ENCODE measurements at regions of chr3 and their contacts with region 1.

Region 1: GRCh38 chr3:52001443-52001974 is 5.8 kb upstream of the RPL29 start:
- DNase-seq: peak; percentile 77
- H3K4me3 ChIP-seq: no peak overlapping the region
- H3K27ac ChIP-seq: no peak overlapping the region
- H3K4me1 ChIP-seq: peaks cover 35% of the 10 kb centered on the region
- H3K27me3 ChIP-seq: no peaks in the 10 kb centered on the region
- CTCF ChIP-seq: peak; percentile 91

Region 2: DNA sequence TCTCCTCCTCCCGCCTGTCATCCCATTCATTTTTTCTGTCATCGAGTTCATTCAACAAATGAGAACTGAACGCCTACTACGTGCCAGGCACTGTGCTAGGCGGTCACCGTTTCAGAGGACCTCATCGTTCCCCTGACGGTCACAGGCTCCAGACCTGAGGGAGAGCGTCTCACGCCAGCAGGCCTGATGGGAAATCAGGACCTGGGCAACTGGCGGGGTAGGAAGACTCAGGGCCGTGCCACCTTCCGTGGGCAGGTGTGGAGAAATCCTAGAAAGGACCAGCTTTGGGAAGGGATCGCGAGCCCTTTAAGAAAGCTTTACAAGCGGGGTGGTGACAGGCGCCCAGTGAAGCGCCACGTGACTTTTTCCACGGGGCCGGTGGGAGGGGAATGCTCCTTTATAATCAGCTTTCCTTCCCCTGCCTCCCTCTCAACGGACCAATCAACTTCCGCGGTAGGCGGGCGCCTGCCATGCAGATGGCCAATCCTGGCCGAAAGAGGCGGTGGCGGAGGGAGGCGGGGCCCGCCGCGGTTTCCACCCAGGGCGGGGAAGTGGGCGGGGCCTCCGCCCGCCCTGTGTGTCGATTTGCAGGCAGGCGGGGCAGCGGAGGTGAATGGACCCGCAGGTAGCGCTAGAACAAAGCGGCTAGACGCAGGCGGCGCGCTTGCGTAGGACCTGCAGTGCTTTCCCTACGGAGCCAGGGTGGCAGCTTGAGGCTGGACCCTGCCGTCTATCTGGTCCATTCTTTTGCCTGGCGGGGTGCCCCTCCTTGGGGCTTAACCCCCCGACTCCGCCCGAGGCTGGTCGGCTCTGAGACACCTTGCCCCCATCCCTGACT is 55.7 kb after region 1 on chr3:
- intact Hi-C with region 1: loop called (anchors 10 kb)
- DNase-seq: peak; percentile 99
- H3K4me3 ChIP-seq: peak overlapping the region; percentile 80
- H3K27ac ChIP-seq: peak overlapping the region; percentile 95
- H3K4me1 ChIP-seq: peaks cover 58% of the 10 kb centered on the region
- H3K27me3 ChIP-seq: no peaks in the 10 kb centered on the region
- CTCF ChIP-seq: no peak

Region 3: DNA sequence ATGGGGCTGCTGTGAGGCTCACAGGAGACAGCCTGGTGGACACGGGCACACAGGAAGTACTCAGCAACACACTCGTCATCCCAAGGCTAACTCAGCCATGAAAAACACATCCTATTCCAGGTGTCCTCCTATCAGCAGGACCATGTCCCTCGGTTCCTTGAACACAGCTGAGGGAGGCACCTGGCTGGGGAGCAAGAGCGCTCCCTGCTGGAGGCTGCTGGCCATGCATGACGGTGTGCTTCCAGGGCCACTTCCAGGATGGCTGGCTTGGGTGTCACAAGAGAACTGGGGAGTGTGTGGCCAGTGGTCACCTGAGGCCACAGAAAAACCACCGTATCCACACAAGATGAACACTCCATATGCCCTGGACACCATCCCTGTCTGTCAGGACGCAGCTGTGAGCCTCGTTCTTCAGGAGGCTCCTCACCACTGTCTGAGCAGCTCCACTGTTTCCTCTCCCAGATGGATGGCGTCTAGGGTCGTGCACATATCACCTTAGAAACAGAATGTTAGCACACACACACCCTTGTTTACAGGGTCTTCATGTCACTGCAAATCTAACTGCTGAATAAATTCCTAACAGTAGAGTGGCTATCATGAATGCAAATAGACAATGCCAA is 121.7 kb after region 1 on chr3:
- intact Hi-C with region 1: loop called (anchors 1 kb)
- DNase-seq: peak; percentile 66
- H3K4me3 ChIP-seq: no peak overlapping the region
- H3K27ac ChIP-seq: peak overlapping the region; percentile 87
- H3K4me1 ChIP-seq: peaks cover 36% of the 10 kb centered on the region
- H3K27me3 ChIP-seq: no peaks in the 10 kb centered on the region
- CTCF ChIP-seq: peak; percentile 97

Region 4: DNA sequence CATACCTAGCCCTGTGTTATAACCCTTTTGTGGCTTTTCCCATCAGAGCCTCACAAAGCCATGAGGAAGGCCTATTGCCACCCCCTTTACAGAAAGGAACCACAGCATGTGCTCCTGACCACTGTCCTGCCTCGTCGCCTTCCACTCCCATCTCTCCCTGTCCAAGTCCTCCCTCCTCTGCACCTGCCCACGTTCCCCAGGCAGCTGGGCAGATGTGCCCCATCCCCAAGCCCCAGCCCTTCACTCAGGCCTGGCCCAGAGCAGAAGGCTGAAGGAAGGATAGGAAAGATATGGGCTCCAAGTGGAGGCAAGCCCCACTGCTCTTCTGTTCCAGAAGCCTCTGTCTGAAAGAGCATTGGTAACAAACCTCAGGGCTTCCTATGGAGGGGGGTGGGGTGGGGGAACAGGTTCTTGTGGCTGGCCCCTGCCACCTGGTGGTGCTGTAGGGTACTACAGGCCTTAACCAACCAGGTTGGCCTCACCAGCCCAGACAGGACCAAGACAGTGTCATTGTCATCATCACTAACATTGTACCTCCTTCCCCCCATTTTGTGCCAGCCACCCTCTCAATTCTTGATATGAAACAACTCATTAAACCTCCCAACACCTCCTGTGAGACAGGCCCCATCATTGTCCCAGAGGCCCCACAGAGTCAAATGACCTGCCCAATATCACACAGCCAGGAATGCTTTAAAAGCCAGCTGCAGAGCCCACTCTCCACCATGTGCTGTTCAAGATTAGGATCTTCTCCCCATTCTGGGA is 142.7 kb after region 1 on chr3:
- intact Hi-C with region 1: loop called (anchors 5 kb)
- DNase-seq: peak; percentile 87
- H3K4me3 ChIP-seq: no peak overlapping the region
- H3K27ac ChIP-seq: no peak overlapping the region
- H3K4me1 ChIP-seq: peaks cover 21% of the 10 kb centered on the region
- H3K27me3 ChIP-seq: no peaks in the 10 kb centered on the region
- CTCF ChIP-seq: peak; percentile 99

Region 5: GRCh38 chr3:52281981-52282801 is 280.7 kb after region 1 on chr3:
- intact Hi-C with region 1: no loop called
- DNase-seq: no peak
- H3K4me3 ChIP-seq: no peak overlapping the region
- H3K27ac ChIP-seq: peak overlapping the region; percentile 25
- H3K4me1 ChIP-seq: peaks cover 47% of the 10 kb centered on the region
- H3K27me3 ChIP-seq: no peaks in the 10 kb centered on the region
- CTCF ChIP-seq: no peak

Measured in left ventricle myocardium inferior (tissue), 1 donor.